Breast epithelium (tissue), 4 donors: ENCODE measurements at regions of chr9 and their contacts with region 1.

Region 1: GRCh38 chr9:128677794-128678193 is 11.2 kb upstream of the SET start:
- DNase-seq: no peak
- H3K4me3 ChIP-seq: no peak overlapping the region
- H3K27ac ChIP-seq: no peak overlapping the region
- H3K4me1 ChIP-seq: no peaks in the 10 kb centered on the region
- H3K27me3 ChIP-seq: no peaks in the 10 kb centered on the region
- CTCF ChIP-seq: no peak
- POLR2A ChIP-seq: no peak

Region 2: DNA sequence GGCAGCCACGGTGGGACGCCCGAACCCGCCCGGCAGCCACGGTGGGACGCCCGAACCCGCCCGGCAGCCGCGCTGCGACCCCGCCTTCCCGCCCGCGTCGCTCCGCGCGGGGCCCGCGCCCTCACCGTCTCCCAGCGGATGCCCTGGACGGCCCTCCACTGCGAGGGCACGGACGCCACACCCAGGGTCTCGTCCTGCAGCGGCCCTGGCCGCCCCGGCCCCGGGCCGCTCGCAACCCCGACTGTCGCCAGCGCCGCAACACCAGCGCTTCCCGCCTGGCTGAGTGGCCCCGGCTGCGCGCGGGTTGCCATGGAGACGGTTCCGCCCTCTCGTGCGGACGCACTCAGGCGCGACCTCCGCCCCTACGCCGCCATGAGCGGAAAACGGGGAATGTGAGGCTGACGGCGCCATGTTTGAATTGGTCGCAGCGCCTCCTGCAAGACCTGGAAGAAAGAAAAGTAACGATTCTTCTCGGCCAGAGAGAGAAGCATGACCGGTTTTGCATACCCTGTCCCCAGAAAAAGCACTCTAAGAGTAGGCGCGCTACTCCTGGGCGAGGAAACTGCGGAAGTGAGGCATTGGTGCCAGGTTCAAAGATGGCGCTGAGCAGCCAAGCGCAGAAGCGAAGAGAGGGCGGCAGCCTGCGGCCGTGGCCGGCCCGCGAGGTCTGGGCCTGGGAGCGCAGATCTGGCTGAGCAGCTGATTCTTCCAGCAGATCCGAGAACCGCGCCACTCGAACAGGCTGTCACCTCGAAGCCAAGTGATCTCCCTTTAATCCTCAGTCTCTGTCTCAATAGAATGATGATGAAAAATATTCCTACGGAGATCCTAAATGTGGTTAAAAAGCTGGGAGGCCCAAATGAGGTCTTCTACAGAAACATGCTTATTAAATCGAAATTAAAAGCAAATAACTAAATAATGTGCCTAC is 21.1 kb before region 1 on chr9 and contains the start of gene DYNC2I2:
- intact Hi-C with region 1: no loop called
- DNase-seq: peak; percentile 90 to 96
- H3K4me3 ChIP-seq: peak within 1 kb of the TSS; percentile 63 to 87 (median 76)
- H3K27ac ChIP-seq: peak within 1 kb of the TSS; percentile 93 to 95
- H3K4me1 ChIP-seq: no peaks in the 10 kb centered on the region
- H3K27me3 ChIP-seq: no peaks in the 10 kb centered on the region
- CTCF ChIP-seq: peak in 1 of 3 donors; percentile 11
- POLR2A ChIP-seq: peak; percentile 30
- total RNA-seq, gene DYNC2I2: 23.7 to 67.0 (median 54.1) TPM

Region 3: GRCh38 chr9:128694344-128694743 is 16.6 kb after region 1 on chr9:
- intact Hi-C with region 1: loop called (anchors 2 kb)
- DNase-seq: no peak
- H3K4me3 ChIP-seq: no peak overlapping the region
- H3K27ac ChIP-seq: no peak overlapping the region
- H3K4me1 ChIP-seq: peaks cover 0 to 4% of the 10 kb centered on the region in 2 donors
- H3K27me3 ChIP-seq: no peaks in the 10 kb centered on the region
- CTCF ChIP-seq: no peak
- POLR2A ChIP-seq: no peak